ENCODE measurements at regions of chr20 and their contacts with region 1.

Region 1: DNA sequence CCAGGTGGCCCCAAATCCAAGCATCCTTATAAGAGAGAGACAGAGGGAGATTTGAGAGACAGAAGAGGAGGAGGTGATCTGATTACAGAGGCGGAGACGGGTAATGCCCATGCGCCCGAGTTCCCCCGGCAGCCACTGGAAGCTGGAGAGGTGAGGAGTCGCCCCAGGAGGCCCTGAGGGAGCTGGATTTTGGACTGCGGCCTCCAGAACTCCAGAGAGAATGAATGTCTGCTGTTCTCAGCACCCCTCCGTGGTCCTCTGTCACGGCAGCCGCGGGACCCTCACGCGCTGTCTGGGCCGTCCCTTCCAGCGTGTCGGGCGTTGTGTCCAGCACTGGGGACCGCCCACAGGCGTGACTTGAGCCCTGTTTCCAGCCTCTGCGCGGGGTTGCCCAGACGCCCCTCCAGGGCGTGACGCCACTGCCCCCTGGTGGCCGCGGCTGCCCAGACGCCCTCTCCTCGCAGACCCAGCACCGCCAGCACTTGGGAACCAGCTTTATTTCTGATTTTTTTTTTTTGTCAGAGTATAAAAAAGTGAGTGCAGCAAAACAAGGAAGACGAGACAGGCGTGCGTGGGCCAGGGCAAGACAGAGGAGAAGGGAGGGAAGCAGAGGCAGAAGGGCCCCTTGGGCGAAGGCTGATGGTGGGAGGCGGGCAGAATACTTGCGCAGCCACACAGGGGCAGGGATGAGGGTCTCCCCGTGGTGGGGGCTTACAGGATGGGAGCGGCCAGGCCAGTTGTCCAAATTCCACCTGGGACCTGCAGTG is 4.1 kb upstream of the ZNF512B start:
- DNase-seq: peak; percentile 94
- ATAC-seq: peak; percentile 89

Region 2: DNA sequence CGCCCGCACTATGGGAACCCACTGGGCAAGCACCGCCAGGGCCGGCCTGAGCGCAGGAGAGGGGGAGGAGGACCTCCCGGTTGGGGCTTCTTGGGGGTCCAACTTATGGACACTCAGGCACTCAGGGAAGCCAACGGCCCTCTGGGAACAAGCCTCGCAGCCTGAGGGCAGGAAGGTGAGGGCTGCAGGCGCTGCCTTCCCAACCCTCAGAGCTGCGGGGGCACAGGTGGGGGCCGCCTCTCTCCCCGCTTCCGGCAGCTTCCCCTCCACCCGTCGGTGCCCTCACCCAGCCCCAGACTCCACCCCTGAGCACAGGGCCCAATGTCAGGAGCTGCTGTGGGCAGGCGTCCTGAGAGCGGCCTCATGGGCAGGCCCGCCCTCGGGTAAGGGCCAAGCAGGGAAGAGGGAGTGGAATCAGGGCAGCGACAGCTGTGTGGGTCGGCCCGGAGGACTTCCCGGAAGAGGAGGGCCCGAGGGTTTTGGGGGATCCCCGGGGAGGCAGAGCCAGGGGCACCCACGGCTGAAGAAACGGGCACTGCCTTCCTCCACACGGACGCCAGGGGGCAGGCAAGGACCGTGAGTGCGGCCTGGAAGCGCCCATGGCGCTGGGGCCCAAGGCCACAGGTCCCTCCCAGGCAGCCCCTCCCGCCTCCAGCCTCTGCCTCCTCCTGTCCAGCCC is 436.2 kb before region 1 on chr20:
- intact Hi-C with region 1: loop called (anchors 2 kb)
- DNase-seq: peak; percentile 92
- ATAC-seq: peak; percentile 91

Region 3: DNA sequence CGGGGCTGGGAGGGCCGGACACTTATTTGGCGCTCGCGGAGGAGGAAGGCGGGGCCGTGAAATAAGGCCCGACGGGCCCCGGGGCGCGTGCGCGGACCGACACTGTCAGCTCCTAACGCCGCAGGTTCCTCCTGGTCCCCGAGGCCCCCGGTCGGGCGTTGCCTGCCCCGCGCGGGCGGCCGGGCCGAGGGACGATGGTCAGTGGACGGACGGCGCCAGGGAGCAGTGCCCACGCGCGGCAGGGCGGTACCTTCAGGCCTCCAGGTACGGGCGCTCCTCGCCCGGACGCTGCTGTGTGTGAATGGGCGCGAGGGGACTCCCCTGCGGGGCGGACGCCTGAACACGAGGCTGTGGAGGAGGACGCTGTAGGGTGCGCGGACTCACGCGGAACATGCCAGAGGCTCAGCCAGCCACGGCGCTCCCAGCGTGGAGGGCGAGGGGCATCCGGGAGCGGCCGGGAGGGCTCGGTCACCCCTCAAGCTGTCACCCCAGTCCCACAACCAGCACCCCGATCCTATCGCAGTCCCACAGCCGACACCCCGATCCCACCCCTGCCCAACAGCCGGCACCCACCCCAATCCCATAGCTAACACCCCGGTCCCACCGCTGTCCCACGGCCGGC is 346.6 kb before region 1 on chr20:
- intact Hi-C with region 1: loop called (anchors 5 kb)
- DNase-seq: peak; percentile 99
- ATAC-seq: peak; percentile 94

Region 4: GRCh38 chr20:63775096-63775978 is 198.5 kb before region 1 on chr20:
- intact Hi-C with region 1: loop called (anchors 10 kb)
- DNase-seq: no peak
- ATAC-seq: peak; percentile 49

Region 5: DNA sequence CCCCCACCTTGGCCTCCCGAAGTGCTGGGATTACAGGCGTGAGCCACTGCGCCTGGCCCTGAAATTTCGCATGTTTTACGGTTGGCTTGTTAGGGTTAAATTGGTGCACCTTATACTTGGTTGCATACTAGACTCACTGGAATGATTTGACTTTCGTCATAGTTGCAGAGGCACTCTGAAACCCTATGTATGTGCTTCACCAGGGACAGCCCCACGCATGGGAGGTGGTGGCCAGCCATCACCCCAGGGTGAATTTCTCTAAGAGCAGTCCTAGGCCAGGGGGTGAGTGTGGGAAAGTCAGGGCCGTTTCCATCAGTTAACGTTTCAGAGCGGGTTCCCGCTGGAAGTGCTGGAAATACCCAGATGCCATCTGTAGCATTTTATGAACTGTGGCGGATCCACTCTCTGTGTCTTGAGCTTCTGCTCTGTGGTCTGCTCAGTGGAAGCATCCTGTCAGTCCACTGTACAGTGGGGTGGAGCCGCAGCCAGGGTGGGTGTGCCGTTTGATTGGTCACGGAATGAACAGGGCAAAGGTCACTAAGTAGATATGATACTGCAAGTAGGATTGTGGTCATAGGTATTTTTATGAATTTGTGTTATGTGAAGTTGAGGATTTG is 65.7 kb before region 1 on chr20:
- intact Hi-C with region 1: loop called (anchors 2 kb)
- DNase-seq: no peak
- ATAC-seq: no peak